ENCODE measurements at regions of chr10 and their contacts with region 1.

Region 1: DNA sequence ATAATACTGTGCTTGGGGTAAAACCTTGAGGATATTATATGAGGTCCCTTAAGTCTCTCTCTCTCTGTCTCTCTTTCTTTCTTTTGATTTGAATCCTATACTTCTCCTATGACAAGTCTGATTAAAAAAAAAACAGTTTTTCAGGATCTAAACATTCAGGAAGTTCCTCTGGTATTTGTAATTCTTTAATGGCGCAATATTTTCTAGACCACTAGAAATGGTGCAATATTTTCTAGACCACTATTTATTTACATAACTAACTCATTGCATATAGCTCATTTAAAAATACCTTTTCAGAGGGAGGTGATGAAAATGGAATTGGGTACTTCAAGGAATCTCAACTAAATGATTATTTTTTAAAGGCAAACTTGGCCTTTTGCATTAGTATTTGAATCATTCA is 1235.3 kb downstream of the GATA3 start:
- DNase-seq: no peak
- ATAC-seq: no peak
- H3K4me3 ChIP-seq: no peak overlapping the region
- H3K27ac ChIP-seq: no peak overlapping the region
- H3K4me1 ChIP-seq: no peaks in the 10 kb centered on the region
- H3K27me3 ChIP-seq: peaks cover 0 to 2% (median 0%) of the 10 kb centered on the region in 3 donors
- CTCF ChIP-seq: no peak

Region 2: GRCh38 chr10:7710446-7710845 is 1579.4 kb before region 1 on chr10:
- intact Hi-C with region 1: loop called in 1 of 2 experiments (anchors 5 kb)
- DNase-seq: no peak
- ATAC-seq: no peak
- H3K4me3 ChIP-seq: no peak overlapping the region
- H3K27ac ChIP-seq: no peak overlapping the region
- H3K4me1 ChIP-seq: no peaks in the 10 kb centered on the region
- H3K27me3 ChIP-seq: peaks cover 0 to 13% (median 3%) of the 10 kb centered on the region in 3 donors
- CTCF ChIP-seq: no peak

Region 3: GRCh38 chr10:9253108-9253507 is 36.7 kb before region 1 on chr10:
- intact Hi-C with region 1: no loop called
- DNase-seq: no peak
- ATAC-seq: no peak
- H3K4me3 ChIP-seq: no peak overlapping the region
- H3K27ac ChIP-seq: no peak overlapping the region
- H3K4me1 ChIP-seq: no peaks in the 10 kb centered on the region
- H3K27me3 ChIP-seq: peaks cover 0 to 6% (median 0%) of the 10 kb centered on the region in 3 donors
- CTCF ChIP-seq: no peak